Activated CD4-positive, alpha-beta memory T cell treated with anti-CD3 and anti-CD28 coated beads for 36 hours (primary cell): ENCODE measurements at regions of chr5 and their contacts with region 1.

Region 1: DNA sequence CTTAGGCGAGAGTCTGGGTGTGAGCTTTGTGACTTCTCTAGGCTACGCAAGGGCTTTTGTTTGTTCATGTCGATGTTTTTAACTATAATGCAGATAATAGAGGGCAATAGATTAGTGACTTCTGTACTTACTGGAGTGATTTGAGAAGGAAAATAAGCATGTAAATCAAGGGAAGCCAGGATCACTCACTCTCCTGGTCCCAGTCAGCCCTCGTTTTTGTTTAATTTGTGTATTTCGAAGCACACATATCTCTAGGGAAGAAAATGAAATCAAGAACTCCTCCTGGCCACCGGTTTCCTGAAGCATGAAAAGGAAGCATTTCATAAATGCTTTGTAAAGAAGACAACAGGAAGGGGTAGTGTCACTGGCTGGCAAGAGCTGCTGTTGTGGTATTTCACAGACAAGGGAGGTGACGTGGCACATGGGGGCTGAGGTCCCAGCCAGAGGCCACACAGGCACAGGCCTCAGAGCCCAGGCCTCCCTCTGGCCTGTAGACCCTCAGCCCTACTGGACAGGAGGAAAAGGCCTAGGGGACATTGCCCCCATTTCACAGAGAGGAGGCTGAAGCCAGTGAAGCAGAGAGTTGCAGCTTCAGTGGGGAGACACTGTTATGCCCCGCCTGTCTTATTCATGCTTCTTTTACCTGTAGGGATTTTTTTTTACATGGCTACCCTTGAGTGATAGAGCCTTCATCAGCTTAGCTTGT is 34.1 kb downstream of the IRF1 start:
- DNase-seq: peak; percentile 76
- H3K4me3 Mint-ChIP-seq: peak overlapping the region; percentile 53
- H3K27ac Mint-ChIP-seq: peak overlapping the region; percentile 92
- H3K4me1 Mint-ChIP-seq: peaks cover 90% of the 10 kb centered on the region
- H3K27me3 Mint-ChIP-seq: no peaks in the 10 kb centered on the region

Region 2: GRCh38 chr5:132386644-132387286 is 69.7 kb before region 1 on chr5:
- CTCF ChIA-PET with region 1: interaction called, 3 read pairs
- POLR2A ChIA-PET with region 1: no interaction called
- intact Hi-C with region 1: loop called (anchors 2 kb)
- DNase-seq: peak; percentile 87
- H3K4me3 Mint-ChIP-seq: no peak overlapping the region
- H3K27ac Mint-ChIP-seq: peak overlapping the region; percentile 14
- H3K4me1 Mint-ChIP-seq: peaks cover 42% of the 10 kb centered on the region
- H3K27me3 Mint-ChIP-seq: no peaks in the 10 kb centered on the region

Region 3: GRCh38 chr5:132419502-132420468 is 36.7 kb before region 1 on chr5:
- CTCF ChIA-PET with region 1: interaction called, 18 read pairs
- POLR2A ChIA-PET with region 1: interaction called, 102 read pairs
- intact Hi-C with region 1: no loop called
- DNase-seq: peak; percentile 78
- H3K4me3 Mint-ChIP-seq: peak overlapping the region; percentile 15
- H3K27ac Mint-ChIP-seq: peak overlapping the region; percentile 83
- H3K4me1 Mint-ChIP-seq: peaks cover 89% of the 10 kb centered on the region
- H3K27me3 Mint-ChIP-seq: no peaks in the 10 kb centered on the region

Region 4: GRCh38 chr5:132437604-132438266 is 18.7 kb before region 1 on chr5:
- CTCF ChIA-PET with region 1: interaction called, 6 read pairs
- POLR2A ChIA-PET with region 1: interaction called, 14 read pairs
- intact Hi-C with region 1: loop called (anchors 1 kb)
- DNase-seq: peak; percentile 83
- H3K4me3 Mint-ChIP-seq: peak overlapping the region; percentile 18
- H3K27ac Mint-ChIP-seq: peak overlapping the region; percentile 78
- H3K4me1 Mint-ChIP-seq: peaks cover 78% of the 10 kb centered on the region
- H3K27me3 Mint-ChIP-seq: no peaks in the 10 kb centered on the region

Region 5: GRCh38 chr5:132473019-132473531 is 16.6 kb after region 1 on chr5:
- CTCF ChIA-PET with region 1: interaction called, 3 read pairs
- POLR2A ChIA-PET with region 1: interaction called, 64 read pairs
- intact Hi-C with region 1: loop called (anchors 2 kb)
- DNase-seq: peak; percentile 90
- H3K4me3 Mint-ChIP-seq: peak overlapping the region; percentile 7
- H3K27ac Mint-ChIP-seq: peak overlapping the region; percentile 91
- H3K4me1 Mint-ChIP-seq: peaks cover 75% of the 10 kb centered on the region
- H3K27me3 Mint-ChIP-seq: no peaks in the 10 kb centered on the region